Activated naive CD4-positive, alpha-beta T cell treated with anti-CD3 and anti-CD28 coated beads for 36 hours (primary cell): ENCODE measurements at regions of chr11 and their contacts with region 1.

Region 1: GRCh38 chr11:61004180-61004611 is 32.7 kb downstream of the CD6 start:
- DNase-seq: peak; percentile 78
- H3K4me3 Mint-ChIP-seq: peak overlapping the region; percentile 66
- H3K27ac Mint-ChIP-seq: peak overlapping the region; percentile 95
- H3K4me1 Mint-ChIP-seq: peaks cover 91% of the 10 kb centered on the region
- H3K27me3 Mint-ChIP-seq: no peaks in the 10 kb centered on the region

Region 2: GRCh38 chr11:60561254-60561653 is 442.9 kb before region 1 on chr11:
- CTCF ChIA-PET with region 1: no interaction called
- intact Hi-C with region 1: no loop called
- DNase-seq: no peak
- H3K4me3 Mint-ChIP-seq: no peak overlapping the region
- H3K27ac Mint-ChIP-seq: no peak overlapping the region
- H3K4me1 Mint-ChIP-seq: peaks cover 2% of the 10 kb centered on the region
- H3K27me3 Mint-ChIP-seq: peaks cover 2% of the 10 kb centered on the region

Region 3: GRCh38 chr11:60992842-60993409 is 11.3 kb before region 1 on chr11:
- CTCF ChIA-PET with region 1: interaction called, 5 read pairs
- intact Hi-C with region 1: loop called (anchors 1 kb)
- DNase-seq: no peak
- H3K4me3 Mint-ChIP-seq: peak overlapping the region; percentile 74
- H3K27ac Mint-ChIP-seq: peak overlapping the region; percentile 98
- H3K4me1 Mint-ChIP-seq: peaks cover 81% of the 10 kb centered on the region
- H3K27me3 Mint-ChIP-seq: no peaks in the 10 kb centered on the region